Activated naive CD4-positive, alpha-beta T cell treated with anti-CD3 and anti-CD28 coated beads for 36 hours (primary cell): ENCODE measurements at regions of chr7 and their contacts with region 1.

Region 1: GRCh38 chr7:148828965-148829364 is 55.1 kb downstream of the EZH2 start:
- DNase-seq: no peak
- H3K4me3 Mint-ChIP-seq: no peak overlapping the region
- H3K27ac Mint-ChIP-seq: no peak overlapping the region
- H3K4me1 Mint-ChIP-seq: peaks cover 1% of the 10 kb centered on the region
- H3K27me3 Mint-ChIP-seq: no peaks in the 10 kb centered on the region

Region 2: GRCh38 chr7:148789220-148789619 is 39.7 kb before region 1 on chr7:
- CTCF ChIA-PET with region 1: no interaction called
- intact Hi-C with region 1: no loop called
- DNase-seq: no peak
- H3K4me3 Mint-ChIP-seq: no peak overlapping the region
- H3K27ac Mint-ChIP-seq: no peak overlapping the region
- H3K4me1 Mint-ChIP-seq: peaks cover 4% of the 10 kb centered on the region
- H3K27me3 Mint-ChIP-seq: no peaks in the 10 kb centered on the region

Region 3: DNA sequence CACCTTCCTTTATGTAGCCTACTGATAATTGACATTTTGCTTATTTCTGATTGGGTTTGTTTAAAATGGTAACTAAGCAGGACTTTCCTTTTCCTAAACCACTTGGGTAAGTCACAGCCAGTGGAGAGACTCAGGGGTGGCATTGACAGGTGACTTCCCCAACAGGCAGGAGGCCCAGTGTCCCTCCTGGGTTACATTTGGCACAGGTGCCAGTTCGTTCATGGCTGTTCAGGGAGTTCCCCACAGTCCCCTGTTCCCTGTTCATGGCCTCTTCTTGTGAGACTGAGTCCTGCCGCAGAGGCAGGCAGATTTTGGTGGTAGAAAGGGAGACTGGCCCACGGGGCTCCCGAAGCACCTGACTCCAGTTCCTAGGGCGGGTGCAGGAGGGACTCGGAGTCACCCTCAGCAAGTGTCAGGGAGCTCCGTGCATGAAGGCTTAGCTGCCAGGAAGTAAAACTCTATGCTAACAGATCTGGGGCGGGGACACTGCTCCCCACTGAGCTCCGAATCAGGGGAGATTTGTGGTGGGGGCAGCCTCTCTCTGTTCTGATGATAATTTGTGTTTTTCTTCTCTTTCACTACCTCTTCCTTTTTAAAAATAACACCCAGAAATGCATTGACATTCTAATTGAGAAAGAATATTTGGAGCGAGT is 28.9 kb before region 1 on chr7:
- CTCF ChIA-PET with region 1: no interaction called
- intact Hi-C with region 1: loop called (anchors 5 kb)
- DNase-seq: no peak
- H3K4me3 Mint-ChIP-seq: no peak overlapping the region
- H3K27ac Mint-ChIP-seq: no peak overlapping the region
- H3K4me1 Mint-ChIP-seq: no peaks in the 10 kb centered on the region
- H3K27me3 Mint-ChIP-seq: no peaks in the 10 kb centered on the region

Region 4: DNA sequence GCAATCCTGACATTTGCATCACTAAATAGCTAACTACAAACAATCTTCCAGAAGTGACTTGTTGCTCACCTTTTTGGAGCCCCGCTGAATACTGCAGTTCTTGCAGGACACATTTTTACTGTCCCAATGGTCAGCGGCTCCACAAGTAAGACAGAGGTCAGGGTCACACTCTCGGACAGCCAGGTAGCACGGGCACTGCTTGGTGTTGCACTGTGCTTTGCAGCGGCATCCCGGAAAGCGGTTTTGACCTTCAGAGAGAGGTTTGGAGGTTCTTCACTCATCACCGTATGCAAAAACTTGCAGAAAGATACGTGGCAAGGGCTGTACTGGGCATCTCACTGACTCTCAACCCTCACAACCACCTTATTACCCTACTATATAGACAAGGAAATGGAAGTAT is 15.1 kb before region 1 on chr7:
- CTCF ChIA-PET with region 1: no interaction called
- intact Hi-C with region 1: loop called (anchors 2 kb)
- DNase-seq: no peak
- H3K4me3 Mint-ChIP-seq: no peak overlapping the region
- H3K27ac Mint-ChIP-seq: no peak overlapping the region
- H3K4me1 Mint-ChIP-seq: peaks cover 4% of the 10 kb centered on the region
- H3K27me3 Mint-ChIP-seq: no peaks in the 10 kb centered on the region